GM18951 (cell line): ENCODE measurements at regions of chr3 and their contacts with region 1.

Region 1: GRCh38 chr3:101809178-101810021 is 30.4 kb downstream of the NXPE3 start:
- POLR2A ChIP-seq: no peak

Region 2: DNA sequence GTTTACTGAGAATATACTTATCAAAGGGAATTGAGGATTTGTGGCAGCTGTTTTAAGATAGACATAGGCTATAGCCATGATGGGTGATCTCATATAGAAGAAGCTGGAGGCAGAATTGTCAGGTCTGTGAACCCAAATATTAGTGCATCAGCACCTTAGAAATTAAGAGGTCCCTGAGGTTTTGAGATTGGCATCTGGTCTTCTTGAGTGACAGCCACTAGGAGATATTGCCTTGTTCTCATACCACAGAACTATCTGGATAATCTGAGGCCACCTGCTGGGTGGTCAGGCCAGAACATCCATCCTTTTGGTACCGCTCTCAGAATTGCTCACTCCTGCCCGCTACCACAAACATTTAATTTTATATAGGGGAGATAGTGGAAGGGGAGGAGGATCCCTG is 414.7 kb after region 1 on chr3:
- in situ Hi-C with region 1: loop called (anchors 5 kb)
- POLR2A ChIP-seq: no peak

Region 3: DNA sequence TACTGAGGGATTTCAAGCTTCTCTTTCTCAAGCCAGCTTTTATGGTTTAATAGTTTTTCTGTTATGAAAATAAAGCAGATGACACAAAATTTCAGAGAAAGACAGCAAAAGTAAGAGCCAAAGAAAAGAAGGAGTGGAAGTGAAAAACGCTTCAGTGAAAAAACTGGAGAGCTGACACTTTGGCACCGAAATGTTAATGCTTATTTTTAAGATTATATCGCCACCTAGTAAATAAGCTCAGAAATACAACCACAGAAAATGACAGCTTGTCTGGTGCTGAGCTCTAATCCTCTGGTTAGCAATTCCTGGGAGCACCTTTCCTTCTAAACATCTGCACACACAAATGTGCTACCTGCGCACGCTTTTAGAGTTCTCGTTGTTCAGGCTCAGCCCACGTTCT is 727.1 kb after region 1 on chr3:
- in situ Hi-C with region 1: loop called (anchors 5 kb)
- POLR2A ChIP-seq: no peak